ENCODE measurements at regions of chr17 and their contacts with region 1.

Region 1: DNA sequence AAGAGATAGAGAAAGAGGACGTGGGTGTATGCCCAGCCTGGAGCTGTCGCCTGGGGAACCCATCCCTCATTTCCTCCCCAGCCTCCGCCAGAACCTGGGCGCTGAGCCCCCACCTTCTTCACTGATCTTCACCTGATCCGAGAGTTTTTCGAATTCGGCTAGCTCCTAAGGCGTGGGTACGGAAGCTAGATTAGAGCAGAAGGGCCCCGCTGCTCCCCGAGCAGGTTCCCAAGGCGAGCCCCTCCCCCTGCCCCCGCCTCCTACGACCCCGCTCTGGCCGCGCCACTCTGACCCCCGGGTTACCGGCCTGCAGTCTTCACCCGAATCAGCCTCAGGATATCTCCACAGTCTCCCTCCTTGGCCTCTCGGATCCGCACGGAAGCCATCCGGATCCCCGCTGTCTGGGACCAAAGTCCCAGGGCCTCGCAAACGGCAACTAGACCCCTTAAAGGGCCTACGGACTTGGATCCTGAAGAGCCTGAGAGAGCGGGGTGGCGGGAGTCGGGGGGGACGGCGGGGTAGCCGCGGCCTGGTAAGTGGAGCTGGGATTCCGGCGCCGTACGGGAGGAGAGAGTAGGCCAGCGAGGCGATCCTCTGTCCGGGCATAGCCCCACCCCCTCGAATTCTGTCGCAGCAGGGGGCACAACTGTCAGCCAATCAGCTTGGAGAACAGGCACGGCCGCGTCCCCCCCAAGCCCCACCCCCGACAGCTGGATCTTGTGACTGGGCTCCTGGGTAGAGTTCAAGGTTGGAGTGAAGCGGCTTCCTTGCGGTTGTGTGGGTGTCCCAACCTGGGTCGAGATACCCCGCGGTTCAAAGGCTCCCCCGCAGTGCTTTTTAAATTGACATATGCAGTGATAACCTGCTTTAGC is at the start of gene SAT2:
- DNase-seq: peak; percentile 95
- ATAC-seq: peak; percentile 85
- H3K4me3 ChIP-seq: peak within 1 kb of the TSS; percentile 82 to 92 (median 89)
- H3K27ac ChIP-seq: peak within 1 kb of the TSS; percentile 96
- H3K4me1 ChIP-seq: peaks cover 73% of the 10 kb centered on the region
- H3K27me3 ChIP-seq: no peaks in the 10 kb centered on the region; a peak in 1 of 5 replicates
- CTCF ChIP-seq: 0 out of 2 replicates have a peak, but pooled peaks have one; percentile 12
- EP300 ChIP-seq: peak; percentile 43 to 55; a peak in 3 of 4 replicates
- POLR2A ChIP-seq: peak; percentile 83 to 89
- RAD21 ChIP-seq: peak; percentile 21; the same call in 1 of the 2 replicates
- total RNA-seq, gene SAT2: 83.1 and 93.7 TPM in 2 replicates

Region 2: GRCh38 chr17:7583253-7584109 is 44.0 kb before region 1 on chr17 and contains the start of gene MPDU1:
- CTCF ChIA-PET with region 1: no interaction called
- POLR2A ChIA-PET with region 1: interaction called, 25 read pairs
- in situ Hi-C with region 1: no loop called
- intact Hi-C with region 1: no loop called
- DNase-seq: peak; percentile 81
- ATAC-seq: peak; percentile 22
- H3K4me3 ChIP-seq: peak within 1 kb of the TSS; percentile 73 to 83 (median 77)
- H3K27ac ChIP-seq: peak within 1 kb of the TSS; percentile 96
- H3K4me1 ChIP-seq: peaks cover 55% of the 10 kb centered on the region
- H3K27me3 ChIP-seq: no peaks in the 10 kb centered on the region; a peak in 1 of 5 replicates
- CTCF ChIP-seq: peak; percentile 20; the same call in 1 of the 2 replicates
- EP300 ChIP-seq: 0 out of 4 replicates have a peak, but pooled peaks of 1 of the 2 experiments have one; percentile 18
- POLR2A ChIP-seq: peak; percentile 79 to 98
- RAD21 ChIP-seq: no peak
- total RNA-seq, gene MPDU1: 59.5 and 112 TPM in 2 replicates

Region 3: GRCh38 chr17:7650509-7651096 is 23.1 kb after region 1 on chr17 and contains the start of gene ATP1B2:
- CTCF ChIA-PET with region 1: no interaction called
- POLR2A ChIA-PET with region 1: interaction called, 11 read pairs
- in situ Hi-C with region 1: no loop called
- intact Hi-C with region 1: no loop called
- DNase-seq: peak; percentile 67
- ATAC-seq: peak; percentile 82
- H3K4me3 ChIP-seq: peak within 1 kb of the TSS; percentile 40 to 66 (median 43); a peak in 5 of 6 replicates
- H3K27ac ChIP-seq: no peak within 1 kb of the TSS
- H3K4me1 ChIP-seq: peaks cover 20% of the 10 kb centered on the region
- H3K27me3 ChIP-seq: peaks cover 6 to 55% of the 10 kb centered on the region in 2 experiments
- CTCF ChIP-seq: no peak
- EP300 ChIP-seq: no peak
- POLR2A ChIP-seq: no peak
- RAD21 ChIP-seq: no peak
- total RNA-seq, gene ATP1B2: not detected in 2 replicates

Measured in HepG2 (cell line).